Common myeloid progenitor, CD34-positive (primary cell): ENCODE measurements at regions of chr19 and their contacts with region 1.

Region 1: DNA sequence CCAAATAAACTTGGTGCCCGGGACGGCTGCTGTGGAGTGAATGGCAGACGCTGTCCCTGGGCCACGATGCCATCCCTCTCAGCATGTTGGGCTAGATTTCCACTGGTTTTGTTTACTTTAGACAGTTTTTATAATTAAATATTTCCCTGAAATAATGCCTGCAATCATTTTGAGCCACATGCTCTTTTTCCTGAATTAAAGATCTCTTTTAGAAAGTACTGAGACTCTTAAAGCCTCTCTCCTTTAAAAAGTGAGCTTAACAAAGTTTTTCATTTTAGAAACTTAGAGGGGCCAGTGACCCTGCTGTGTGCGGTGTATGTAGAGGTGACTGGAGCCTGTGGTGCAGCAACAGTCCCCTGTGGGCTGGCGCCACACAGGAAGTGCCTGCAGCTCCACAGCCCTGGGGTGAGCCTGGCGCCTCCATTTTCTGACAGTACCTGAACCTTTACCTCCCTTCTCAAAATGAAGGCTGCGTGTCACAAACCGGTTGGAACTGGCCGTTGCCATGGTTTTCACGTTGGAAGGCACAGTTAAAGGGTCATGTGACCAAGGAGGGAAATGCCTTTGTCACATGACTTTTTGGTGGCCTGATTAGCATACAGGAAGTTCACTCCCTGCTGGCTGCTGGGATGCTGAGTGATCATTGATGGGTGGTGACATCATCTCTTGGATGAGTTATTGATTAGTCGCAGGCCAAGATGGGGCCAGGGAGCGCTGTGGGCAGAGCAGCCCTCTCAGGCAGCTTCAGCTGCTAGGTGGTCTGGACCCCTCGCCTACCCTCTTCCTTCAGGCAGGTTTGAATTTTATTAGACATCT is 26.3 kb downstream of the TSSK6 start:
- DNase-seq: peak; percentile 90 to 97 (median 96)
- H3K4me3 ChIP-seq: peak overlapping the region in 4 of 7 experiments; percentile 26 to 43 (median 30)
- H3K27ac ChIP-seq: peak overlapping the region; percentile 77 to 90
- H3K4me1 ChIP-seq: peaks cover 4 to 54% (median 45%) of the 10 kb centered on the region in 4 experiments
- H3K27me3 ChIP-seq: no peaks in the 10 kb centered on the region

Region 2: GRCh38 chr19:19361075-19361594 is 127.9 kb before region 1 on chr19:
- CTCF ChIA-PET with region 1: interaction called, 174 read pairs
- POLR2A ChIA-PET with region 1: interaction called, 4 read pairs
- DNase-seq: peak; percentile 79 to 89 (median 84)
- H3K4me3 ChIP-seq: no peak overlapping the region
- H3K27ac ChIP-seq: no peak overlapping the region
- H3K4me1 ChIP-seq: peaks cover 4 to 13% (median 7%) of the 10 kb centered on the region in 4 experiments
- H3K27me3 ChIP-seq: no peaks in the 10 kb centered on the region

Region 3: DNA sequence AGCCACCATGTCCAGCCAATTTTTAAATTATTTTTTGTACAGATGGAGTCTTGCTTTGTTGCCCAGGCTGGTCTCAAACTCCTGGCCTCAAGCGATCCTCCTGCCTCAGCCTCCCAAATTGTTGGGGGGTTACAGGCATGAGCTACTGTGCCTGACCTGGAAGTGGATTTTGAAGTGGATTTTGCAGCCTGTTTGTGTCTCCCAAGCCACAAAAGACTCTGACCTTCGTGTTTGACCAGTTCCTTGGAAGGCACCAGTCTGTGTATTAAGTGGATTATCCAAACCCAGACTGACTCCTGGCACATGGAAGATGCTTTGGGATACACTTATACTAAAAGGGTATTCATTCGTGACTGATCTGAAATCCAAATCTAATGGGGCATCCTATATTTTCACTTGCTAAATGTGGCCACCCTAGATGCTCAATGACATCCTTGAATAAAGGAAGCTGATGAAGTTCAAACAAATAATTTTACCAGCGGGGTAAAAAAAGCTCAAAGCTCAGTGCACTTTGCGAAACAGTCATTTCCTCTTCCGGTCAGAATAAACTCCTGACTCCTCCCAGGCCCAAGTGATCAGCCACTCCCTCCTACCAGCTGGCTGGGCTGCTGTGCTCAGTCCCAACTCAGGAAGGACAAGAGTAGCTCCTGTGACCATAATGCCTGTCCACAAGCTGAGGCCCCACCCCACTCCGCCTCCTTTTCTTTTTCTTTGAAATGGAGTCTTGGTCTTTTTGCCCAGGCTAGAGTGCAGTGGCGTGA is 116.2 kb before region 1 on chr19:
- CTCF ChIA-PET with region 1: interaction called, 174 read pairs
- POLR2A ChIA-PET with region 1: no interaction called
- DNase-seq: peak; percentile 64 to 84 (median 79)
- H3K4me3 ChIP-seq: peak overlapping the region in 4 of 7 experiments; percentile 27 to 59 (median 46)
- H3K27ac ChIP-seq: peak overlapping the region in 1 of 2 experiments; percentile 66
- H3K4me1 ChIP-seq: peaks cover 0 to 27% (median 15%) of the 10 kb centered on the region in 4 experiments
- H3K27me3 ChIP-seq: no peaks in the 10 kb centered on the region

Region 4: DNA sequence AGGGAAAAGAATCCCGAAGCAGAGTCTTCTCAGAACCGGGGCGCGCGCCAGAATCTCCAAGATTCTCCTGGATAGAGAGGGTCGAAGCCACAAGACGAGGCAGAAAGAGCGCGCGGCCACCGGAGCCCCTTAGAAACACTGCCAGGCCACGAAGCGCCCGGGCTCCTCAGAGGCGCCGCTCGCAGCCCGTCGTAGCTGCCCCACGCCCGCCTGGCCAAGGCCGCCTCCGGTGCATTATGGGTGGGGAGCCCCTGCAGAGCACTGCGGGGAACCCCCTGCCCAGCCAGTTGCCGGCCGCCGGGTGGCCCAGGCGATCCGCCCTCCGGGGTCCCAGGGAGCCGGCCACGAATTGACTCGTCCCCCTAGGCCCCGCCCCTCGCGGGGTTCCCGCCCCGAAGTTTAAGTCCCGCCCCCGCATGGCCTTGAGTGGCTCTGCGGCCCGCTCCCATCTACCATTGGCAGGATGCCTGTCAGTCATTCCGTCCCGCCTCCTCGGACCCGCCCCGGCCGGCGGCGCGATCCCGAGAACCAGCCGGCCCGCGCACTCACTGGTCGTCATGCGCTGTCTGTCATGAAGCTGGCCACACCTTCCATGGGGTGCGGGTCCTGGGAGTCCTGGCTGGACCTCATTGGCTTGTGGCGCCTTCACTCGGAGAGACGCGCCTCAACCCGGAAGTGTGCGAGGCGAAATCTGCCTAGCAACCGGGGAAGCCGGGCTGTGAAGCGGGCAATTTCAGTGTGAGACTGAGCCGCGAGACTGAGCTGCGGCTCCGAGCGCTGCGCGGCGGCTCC is 103.8 kb before region 1 on chr19:
- CTCF ChIA-PET with region 1: interaction called, 13 read pairs
- POLR2A ChIA-PET with region 1: interaction called, 5 read pairs
- DNase-seq: peak; percentile 100
- H3K4me3 ChIP-seq: peak overlapping the region; percentile 79 to 95 (median 91)
- H3K27ac ChIP-seq: peak overlapping the region; percentile 95 to 97
- H3K4me1 ChIP-seq: peaks cover 0 to 41% (median 32%) of the 10 kb centered on the region in 4 experiments
- H3K27me3 ChIP-seq: no peaks in the 10 kb centered on the region

Region 5: GRCh38 chr19:19404879-19405860 is 83.9 kb before region 1 on chr19 and contains the start of gene GATAD2A:
- CTCF ChIA-PET with region 1: interaction called, 21 read pairs
- POLR2A ChIA-PET with region 1: interaction called, 3 read pairs
- DNase-seq: peak; percentile 88 to 92 (median 88)
- H3K4me3 ChIP-seq: peak within 1 kb of the TSS; percentile 61 to 85 (median 78)
- H3K27ac ChIP-seq: peak within 1 kb of the TSS; percentile 20 to 81
- H3K4me1 ChIP-seq: peaks cover 14 to 63% (median 35%) of the 10 kb centered on the region in 4 experiments
- H3K27me3 ChIP-seq: no peaks in the 10 kb centered on the region